GM10248 (cell line): ENCODE measurements at regions of chr2 and their contacts with region 1.

Region 1: GRCh38 chr2:211812587-211812986 is 726.0 kb downstream of the ERBB4 start:
- DNase-seq: no peak
- CTCF ChIP-seq: no peak

Region 2: GRCh38 chr2:211822686-211823335 is 10.2 kb after region 1 on chr2:
- CTCF ChIA-PET with region 1: interaction called, 10 read pairs
- POLR2A ChIA-PET with region 1: no interaction called
- DNase-seq: no peak
- CTCF ChIP-seq: no peak

Region 3: DNA sequence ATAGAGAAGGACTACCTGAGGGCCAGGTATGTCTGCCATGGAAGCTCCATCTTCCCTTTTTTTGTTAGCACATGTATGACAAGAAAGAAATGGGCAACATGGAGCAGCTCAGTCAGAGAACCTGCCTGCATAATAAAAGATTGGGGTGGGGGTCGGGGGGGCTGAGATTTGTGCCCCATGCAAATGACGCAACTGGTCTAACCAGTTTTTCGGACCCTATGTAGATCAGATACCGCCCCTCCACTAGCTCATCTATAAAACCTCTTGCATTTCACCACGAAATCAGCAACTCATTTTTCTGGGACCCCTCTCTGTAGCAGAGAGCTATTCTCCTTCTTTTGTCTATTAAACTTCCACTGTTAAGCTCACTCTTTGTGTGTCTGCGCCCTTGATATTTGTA is 68.9 kb after region 1 on chr2:
- CTCF ChIA-PET with region 1: no interaction called
- POLR2A ChIA-PET with region 1: no interaction called
- DNase-seq: no peak
- CTCF ChIP-seq: no peak

Region 4: GRCh38 chr2:212032032-212032431 is 219.4 kb after region 1 on chr2:
- CTCF ChIA-PET with region 1: no interaction called
- POLR2A ChIA-PET with region 1: no interaction called
- DNase-seq: no peak
- CTCF ChIP-seq: no peak